ENCODE measurements at regions of chr19 and their contacts with region 1.

Region 1: GRCh38 chr19:47608074-47608918 is 638 bp upstream of the BICRA start:
- DNase-seq: peak; percentile 80 to 98
- H3K4me3 ChIP-seq: peak overlapping the region; percentile 100
- H3K27ac ChIP-seq: peak overlapping the region; percentile 68
- H3K4me1 ChIP-seq: peaks cover 11% of the 10 kb centered on the region; the same call in 1 of the 2 replicates
- H3K27me3 ChIP-seq: no peaks in the 10 kb centered on the region
- CTCF ChIP-seq: peak; percentile 21; the same call in 1 of the 2 replicates

Region 2: DNA sequence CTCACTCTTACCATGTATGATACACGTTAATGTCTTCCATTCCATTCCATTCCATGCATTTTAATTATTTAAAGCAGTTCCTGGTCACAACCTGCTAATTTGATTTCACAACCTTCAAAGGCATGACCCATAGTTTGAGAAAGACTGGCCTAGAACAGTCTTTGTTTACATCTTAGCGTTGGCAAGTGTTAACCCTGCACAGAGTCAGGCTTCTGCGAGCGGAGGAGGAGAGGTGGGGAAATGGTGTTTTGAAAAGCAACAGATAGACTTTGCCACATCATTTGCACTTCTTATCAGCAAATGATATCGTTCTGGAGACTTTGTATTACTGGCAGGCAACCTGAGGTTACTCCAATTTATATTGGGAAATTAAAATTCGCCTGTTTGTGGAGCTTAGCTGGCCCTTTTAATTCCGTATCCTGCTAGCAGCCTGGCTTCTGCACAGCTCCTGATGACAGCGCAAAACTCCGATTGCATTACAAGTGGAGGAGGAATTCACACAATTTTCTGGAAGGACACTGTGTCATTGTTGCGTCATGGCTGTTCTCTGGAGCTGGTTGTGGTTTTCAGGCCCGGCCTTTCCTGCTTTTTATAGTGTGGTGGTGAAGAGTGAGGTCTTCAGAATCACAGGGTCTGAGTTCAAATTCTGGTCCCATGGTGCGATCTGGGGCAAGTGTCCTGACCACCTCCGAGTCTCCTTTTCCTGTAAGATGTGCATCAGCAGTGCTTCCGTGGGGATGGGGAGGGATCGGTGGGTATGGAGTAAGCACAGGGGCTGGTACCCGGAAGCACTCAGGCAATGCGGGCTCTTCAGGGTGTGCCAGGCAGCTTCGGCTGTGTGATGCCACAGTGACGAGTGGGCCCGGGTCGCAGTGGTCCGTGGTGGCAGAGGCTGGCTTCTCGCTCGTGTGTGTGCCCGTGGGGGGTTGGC is 55.8 kb after region 1 on chr19:
- CTCF ChIA-PET with region 1: interaction called, 4 read pairs
- POLR2A ChIA-PET with region 1: interaction called, 6 read pairs
- intact Hi-C with region 1: loop called (anchors 1 kb)
- DNase-seq: peak; percentile 68 to 92
- H3K4me3 ChIP-seq: peak overlapping the region; percentile 35
- H3K27ac ChIP-seq: peak overlapping the region; percentile 99
- H3K4me1 ChIP-seq: peaks cover 82% of the 10 kb centered on the region
- H3K27me3 ChIP-seq: no peaks in the 10 kb centered on the region
- CTCF ChIP-seq: 0 out of 2 replicates have a peak, but pooled peaks have one; percentile 14

Measured in PC-9 (cell line).